ENCODE measurements at regions of chr11 and their contacts with region 1.

Region 1: DNA sequence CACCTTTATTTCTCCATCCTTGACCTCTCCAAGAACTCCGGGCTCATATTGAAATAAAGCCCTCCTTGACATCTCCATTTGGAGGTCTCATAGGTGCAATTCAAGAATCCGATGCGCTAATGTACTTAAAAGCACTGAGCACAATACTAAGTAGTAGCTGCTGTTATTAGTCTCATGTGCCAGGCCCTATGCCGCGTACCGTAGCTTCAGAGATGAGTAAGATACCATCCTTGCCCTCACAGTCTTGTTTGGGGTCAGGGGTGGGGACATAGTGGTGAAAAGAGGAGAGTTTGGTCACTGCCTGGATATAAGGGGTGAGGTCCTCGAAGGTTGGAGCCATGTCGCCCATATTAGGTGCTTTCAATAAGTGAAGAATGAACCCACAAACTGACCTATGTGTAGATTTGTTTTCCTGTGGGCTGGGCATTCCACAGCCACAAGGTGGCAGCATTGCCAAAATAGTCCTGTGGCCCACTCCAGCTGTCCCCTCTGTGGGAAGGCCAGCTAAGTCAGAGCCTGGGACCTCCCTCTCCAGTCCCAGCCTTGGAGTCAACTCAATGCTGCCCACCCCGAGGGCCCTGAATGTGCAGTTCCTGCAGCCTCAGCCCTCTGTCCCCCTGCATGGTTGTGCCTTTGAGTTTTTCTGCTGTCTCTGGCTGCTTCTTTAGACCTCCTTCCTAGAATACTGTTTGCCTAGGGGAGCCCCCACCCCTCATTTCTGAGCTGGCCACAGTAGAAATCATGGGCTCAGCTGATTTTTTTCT is 6.5 kb downstream of the DCPS start:
- DNase-seq: peak; percentile 73 to 89 (median 80)
- ATAC-seq: peak; percentile 96
- H3K4me3 ChIP-seq: no peak overlapping the region
- H3K27ac ChIP-seq: peak overlapping the region in 1 of 2 donors; percentile 76
- H3K4me1 ChIP-seq: peaks cover 0 to 47% of the 10 kb centered on the region in 2 donors
- H3K27me3 ChIP-seq: no peaks in the 10 kb centered on the region
- CTCF ChIP-seq: peak; percentile 83 to 84

Region 2: GRCh38 chr11:126163074-126163700 is 147.2 kb before region 1 on chr11:
- intact Hi-C with region 1: no loop called
- DNase-seq: peak in 1 of 4 donors; percentile 45
- ATAC-seq: peak; percentile 43
- H3K4me3 ChIP-seq: no peak overlapping the region
- H3K27ac ChIP-seq: no peak overlapping the region
- H3K4me1 ChIP-seq: no peaks in the 10 kb centered on the region
- H3K27me3 ChIP-seq: no peaks in the 10 kb centered on the region
- CTCF ChIP-seq: no peak

Region 3: DNA sequence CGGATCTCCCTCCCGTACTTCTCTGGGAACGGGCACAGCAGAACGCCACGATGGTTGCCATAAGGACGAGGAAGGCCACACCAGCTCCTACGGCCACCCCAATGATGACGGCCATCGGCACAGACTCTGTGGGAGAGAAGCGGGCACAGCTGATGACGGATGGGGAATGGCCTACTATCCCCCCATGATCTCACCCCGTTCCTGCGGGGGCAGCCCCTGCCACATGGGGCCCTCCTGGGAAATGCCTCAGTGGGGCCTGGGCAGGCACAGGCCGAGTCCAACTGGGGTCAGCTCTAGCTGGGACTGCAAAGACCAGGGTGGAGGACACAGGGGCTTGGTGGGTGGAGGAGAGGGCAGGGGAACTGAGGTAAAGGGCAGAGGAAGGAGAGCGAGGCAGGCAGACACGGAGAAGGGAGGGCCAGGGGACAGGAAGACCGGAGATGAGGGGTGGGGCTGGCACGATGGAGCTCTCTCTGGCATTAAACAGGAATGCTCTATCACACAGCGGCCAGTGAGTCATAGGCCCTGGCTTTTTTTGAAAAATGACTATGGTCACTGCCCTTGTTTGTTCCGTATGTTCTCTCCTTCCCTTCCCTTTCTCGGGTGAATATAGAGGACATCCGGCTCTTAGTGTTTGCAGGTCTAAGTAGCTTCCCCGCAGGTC is 121.1 kb after region 1 on chr11:
- intact Hi-C with region 1: loop called in 1 of 2 experiments (anchors 10 kb)
- DNase-seq: no peak
- ATAC-seq: peak; percentile 52
- H3K4me3 ChIP-seq: no peak overlapping the region
- H3K27ac ChIP-seq: peak overlapping the region; percentile 7 to 56
- H3K4me1 ChIP-seq: peaks cover 3% of the 10 kb centered on the region in 2 donors
- H3K27me3 ChIP-seq: no peaks in the 10 kb centered on the region
- CTCF ChIP-seq: no peak

Region 4: GRCh38 chr11:126480410-126481302 is 170.2 kb after region 1 on chr11:
- intact Hi-C with region 1: loop called in 1 of 2 experiments (anchors 5 kb)
- DNase-seq: peak; percentile 80 to 91 (median 83)
- ATAC-seq: peak; percentile 97
- H3K4me3 ChIP-seq: no peak overlapping the region
- H3K27ac ChIP-seq: peak overlapping the region; percentile 50 to 61
- H3K4me1 ChIP-seq: peaks cover 0 to 18% of the 10 kb centered on the region in 2 donors
- H3K27me3 ChIP-seq: no peaks in the 10 kb centered on the region
- CTCF ChIP-seq: peak; percentile 92 to 96